Psoas muscle (tissue), 8 donors: ENCODE measurements at regions of chr17 and their contacts with region 1.

Region 1: GRCh38 chr17:70254735-70255460 is 85.6 kb downstream of the KCNJ2 start:
- DNase-seq: no peak
- ATAC-seq: no peak
- H3K4me3 ChIP-seq: no peak overlapping the region
- H3K27ac ChIP-seq: no peak overlapping the region
- H3K4me1 ChIP-seq: no peaks in the 10 kb centered on the region
- H3K27me3 ChIP-seq: peaks cover 0 to 4% (median 0%) of the 10 kb centered on the region in 3 donors
- CTCF ChIP-seq: no peak

Region 2: GRCh38 chr17:70375406-70375805 is 120.5 kb after region 1 on chr17:
- intact Hi-C with region 1: no loop called
- DNase-seq: no peak
- ATAC-seq: no peak
- H3K4me3 ChIP-seq: no peak overlapping the region
- H3K27ac ChIP-seq: no peak overlapping the region
- H3K4me1 ChIP-seq: no peaks in the 10 kb centered on the region
- H3K27me3 ChIP-seq: no peaks in the 10 kb centered on the region
- CTCF ChIP-seq: no peak

Region 3: GRCh38 chr17:72233986-72234385 is 1979.1 kb after region 1 on chr17:
- intact Hi-C with region 1: loop called in 1 of 2 experiments (anchors 5 kb)
- DNase-seq: no peak
- ATAC-seq: no peak
- H3K4me3 ChIP-seq: no peak overlapping the region
- H3K27ac ChIP-seq: no peak overlapping the region
- H3K4me1 ChIP-seq: no peaks in the 10 kb centered on the region
- H3K27me3 ChIP-seq: no peaks in the 10 kb centered on the region
- CTCF ChIP-seq: no peak